ENCODE measurements at regions of chr1 and their contacts with region 1.

Region 1: DNA sequence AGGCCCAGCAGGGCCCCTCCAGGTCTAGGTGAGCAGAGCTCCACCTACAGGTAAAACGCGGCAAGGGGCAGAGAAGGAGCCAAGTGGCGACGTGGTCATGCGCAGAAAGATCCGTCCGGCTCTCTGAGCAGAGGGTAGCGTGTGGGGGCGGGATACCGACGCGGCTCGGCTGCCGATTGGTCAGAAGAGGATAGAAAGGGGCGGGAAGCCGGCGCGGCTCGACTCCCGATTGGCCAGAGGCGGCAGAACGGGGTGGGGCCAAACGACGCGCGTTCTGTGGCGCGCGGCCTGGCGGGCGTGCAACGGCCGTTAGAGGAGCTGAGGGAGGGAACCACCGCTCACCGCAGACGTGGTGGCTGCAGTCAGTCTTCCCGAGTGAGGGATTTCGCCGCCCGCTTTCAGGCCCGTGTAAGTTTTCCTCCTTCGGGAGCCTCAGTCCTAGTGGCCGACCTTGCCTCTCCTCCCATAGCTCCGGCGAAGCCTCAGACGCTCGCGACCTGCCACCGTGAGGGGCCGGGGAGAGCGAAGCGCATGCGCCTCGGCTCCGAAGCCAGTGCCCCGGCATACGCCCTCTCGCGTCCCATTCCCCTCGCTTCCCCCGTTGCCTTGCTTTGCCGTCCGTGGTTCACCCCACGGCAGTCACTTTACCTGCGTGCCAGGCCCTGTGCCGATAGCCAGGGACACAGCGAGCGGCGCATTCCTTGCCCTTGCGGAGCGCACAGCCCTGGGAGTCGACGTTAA is at the start of gene CEP85:
- DNase-seq: peak; percentile 97 to 98 (median 98)
- H3K4me3 ChIP-seq: peak within 1 kb of the TSS; percentile 71 to 99 (median 93)
- H3K27ac ChIP-seq: peak within 1 kb of the TSS; percentile 78 to 96
- H3K4me1 ChIP-seq: peaks cover 3 to 35% (median 19%) of the 10 kb centered on the region in 4 experiments
- H3K27me3 ChIP-seq: no peaks in the 10 kb centered on the region

Region 2: DNA sequence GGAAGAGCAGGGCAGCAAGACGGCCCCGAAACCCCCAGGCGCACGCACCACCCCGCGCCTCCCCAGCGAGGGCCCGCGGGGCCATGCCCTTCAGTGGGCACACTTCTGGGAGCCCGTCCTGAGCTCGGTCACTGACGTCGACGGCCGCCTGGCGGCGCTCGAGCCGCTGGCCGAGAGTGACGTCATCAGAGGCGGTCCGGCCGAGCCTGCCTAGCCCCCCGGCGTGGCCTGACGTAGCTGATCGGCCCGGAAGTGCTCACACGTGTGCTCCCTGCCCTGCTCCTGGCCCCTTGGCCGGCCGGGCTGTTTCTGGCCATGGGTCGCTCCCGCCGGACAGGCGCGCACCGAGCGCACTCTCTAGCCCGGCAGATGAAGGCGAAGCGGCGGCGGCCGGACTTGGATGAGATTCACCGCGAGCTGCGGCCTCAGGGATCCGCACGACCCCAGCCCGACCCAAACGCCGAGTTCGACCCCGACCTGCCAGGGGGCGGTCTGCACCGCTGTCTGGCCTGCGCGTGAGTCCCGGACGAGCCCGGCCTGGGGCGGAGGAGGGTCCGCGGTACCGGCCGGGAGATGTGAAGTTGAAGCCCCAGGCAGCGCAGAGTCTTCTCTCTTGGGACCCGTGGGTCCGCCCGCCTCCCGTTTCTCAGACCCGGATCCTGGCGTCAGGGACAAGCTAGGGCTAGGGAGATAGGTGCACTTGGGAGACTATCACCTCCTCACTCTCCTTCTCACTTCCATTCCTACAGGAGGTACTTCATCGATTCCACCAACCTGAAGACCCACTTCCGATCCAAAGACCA is 64.2 kb before region 1 on chr1 and contains the start of gene ZNF593:
- CTCF ChIA-PET with region 1: interaction called, 11 read pairs
- POLR2A ChIA-PET with region 1: interaction called, 3 read pairs
- DNase-seq: peak; percentile 89 to 91 (median 91)
- H3K4me3 ChIP-seq: peak within 1 kb of the TSS; percentile 70 to 85 (median 79)
- H3K27ac ChIP-seq: peak within 1 kb of the TSS; percentile 33 to 85
- H3K4me1 ChIP-seq: peaks cover 0 to 25% (median 11%) of the 10 kb centered on the region in 4 experiments
- H3K27me3 ChIP-seq: no peaks in the 10 kb centered on the region

Region 3: GRCh38 chr1:26190373-26190987 is 43.6 kb before region 1 on chr1 and contains the start of gene CATSPER4:
- CTCF ChIA-PET with region 1: interaction called, 12 read pairs
- POLR2A ChIA-PET with region 1: interaction called, 3 read pairs
- DNase-seq: peak; percentile 29 to 54 (median 49)
- H3K4me3 ChIP-seq: no peak within 1 kb of the TSS
- H3K27ac ChIP-seq: no peak within 1 kb of the TSS
- H3K4me1 ChIP-seq: no peaks in the 10 kb centered on the region
- H3K27me3 ChIP-seq: no peaks in the 10 kb centered on the region

Region 4: GRCh38 chr1:26252718-26253117 is 18.6 kb after region 1 on chr1:
- CTCF ChIA-PET with region 1: interaction called, 10 read pairs
- POLR2A ChIA-PET with region 1: no interaction called
- DNase-seq: no peak
- H3K4me3 ChIP-seq: no peak overlapping the region
- H3K27ac ChIP-seq: no peak overlapping the region
- H3K4me1 ChIP-seq: no peaks in the 10 kb centered on the region
- H3K27me3 ChIP-seq: no peaks in the 10 kb centered on the region

Measured in common myeloid progenitor, CD34-positive (primary cell).